AG04450 (cell line): ENCODE measurements at regions of chr4 and their contacts with region 1.

Region 1: DNA sequence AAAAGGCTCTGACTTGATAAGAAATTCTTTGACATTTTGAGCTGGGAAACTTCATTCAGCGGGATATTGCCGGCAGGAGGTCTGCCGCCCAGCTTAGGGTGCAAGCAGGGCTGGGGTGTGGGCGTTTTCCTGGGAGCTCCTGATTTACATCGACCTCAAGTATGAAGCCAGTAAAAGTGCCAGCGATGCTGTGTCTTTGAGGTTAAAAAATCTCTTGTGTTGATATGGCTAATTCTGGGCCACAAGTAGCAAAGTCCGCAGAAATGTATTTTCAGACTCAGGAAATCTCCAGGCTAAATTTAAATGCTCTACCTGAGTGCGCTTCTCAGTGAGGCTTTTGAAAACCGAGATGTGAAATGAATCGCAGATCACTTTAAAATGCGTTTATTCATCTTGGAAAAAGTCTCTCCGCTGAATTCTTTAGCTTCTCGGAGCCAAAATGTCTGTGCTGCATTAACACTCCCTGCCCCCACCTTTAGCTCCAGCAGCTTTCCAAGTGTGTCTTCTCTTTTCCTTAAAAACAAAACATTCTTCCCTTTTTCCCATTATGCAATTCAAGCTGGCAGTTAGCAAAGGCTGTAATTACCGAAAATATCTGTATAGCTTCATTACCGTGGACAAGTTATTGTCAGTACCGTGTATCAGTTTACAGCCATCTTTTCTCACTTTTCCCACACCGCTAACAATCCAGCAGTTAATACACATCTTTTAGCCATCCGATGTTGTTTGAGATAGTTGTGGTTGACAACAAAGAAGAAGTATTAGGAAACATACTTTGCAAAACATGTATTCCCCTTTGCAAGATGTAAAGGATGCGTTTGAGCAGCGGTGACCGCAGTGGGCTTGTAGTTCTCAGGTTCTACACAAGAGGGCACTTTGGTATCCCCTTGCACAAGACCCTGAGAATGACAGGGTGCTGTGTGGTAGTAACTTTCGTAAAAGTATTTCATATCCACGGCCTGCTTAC is 136.0 kb upstream of the STX18 start:
- DNase-seq: no peak
- H3K4me3 ChIP-seq: peak overlapping the region; percentile 35
- H3K27ac ChIP-seq: no peak overlapping the region
- H3K27me3 ChIP-seq: no peaks in the 10 kb centered on the region
- CTCF ChIP-seq: peak; percentile 81

Region 2: DNA sequence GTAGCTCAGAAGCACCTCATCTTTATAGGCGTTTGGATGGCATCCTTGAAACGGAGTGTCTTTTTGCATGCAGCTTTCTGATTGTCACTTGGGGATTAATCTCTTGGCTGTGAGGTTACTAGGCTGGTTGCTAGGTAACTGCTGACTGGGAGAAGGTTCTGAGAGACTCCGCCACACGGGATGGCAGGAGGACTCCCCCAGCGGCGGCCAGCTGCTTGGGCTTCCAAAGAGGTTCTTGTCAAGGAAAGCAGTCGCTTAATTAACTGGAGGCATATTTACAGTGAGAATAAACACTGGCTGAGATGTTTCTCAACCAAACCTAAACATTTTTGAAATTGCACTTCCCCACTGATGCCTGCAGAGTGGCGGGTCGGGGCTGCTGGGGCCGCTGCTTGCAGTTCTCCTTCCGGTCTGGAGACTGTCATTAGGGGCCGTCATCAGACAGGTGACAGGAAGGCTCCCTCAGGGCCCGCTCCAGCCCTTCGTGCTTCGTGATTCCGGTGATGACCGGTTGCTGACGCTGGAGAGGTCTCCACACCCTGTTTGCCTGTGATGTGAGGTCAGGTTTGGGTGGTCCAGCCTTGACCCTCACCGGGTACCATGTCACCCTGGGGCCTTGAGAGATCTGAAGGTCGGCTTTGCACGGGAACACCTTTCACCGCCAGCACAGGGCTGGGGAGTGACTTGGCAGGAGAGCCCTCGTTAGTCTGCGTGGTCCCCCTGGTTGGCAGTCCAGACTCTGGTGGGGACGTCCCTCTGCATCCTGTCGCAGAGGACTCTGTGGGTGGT is 281.8 kb before region 1 on chr4:
- CTCF ChIA-PET with region 1: no interaction called
- POLR2A ChIA-PET with region 1: no interaction called
- DNase-seq: peak; percentile 42
- H3K4me3 ChIP-seq: peak overlapping the region; percentile 2; the same call in 1 of the 2 replicates
- H3K27ac ChIP-seq: peak overlapping the region; percentile 77
- H3K27me3 ChIP-seq: peaks cover 41% of the 10 kb centered on the region
- CTCF ChIP-seq: peak; percentile 0; the same call in 1 of the 2 replicates

Region 3: DNA sequence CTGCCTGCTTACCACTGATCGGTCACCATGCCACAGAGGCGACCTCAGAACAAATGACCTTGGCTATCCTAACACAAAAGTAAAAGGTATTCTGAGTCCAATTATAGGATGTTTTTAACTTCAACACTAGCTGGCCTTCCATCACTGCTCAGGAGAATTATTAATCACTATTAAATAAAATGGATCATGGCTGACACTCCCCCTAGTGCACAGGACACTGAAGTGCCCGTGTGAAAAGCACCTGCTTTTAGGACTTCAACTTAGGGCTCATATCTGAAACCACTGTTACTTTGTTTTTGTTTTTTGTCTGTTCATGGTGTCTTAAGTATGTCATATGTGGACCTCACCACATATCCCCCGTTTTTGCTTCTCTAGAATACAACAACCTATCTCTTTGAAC is 169.9 kb before region 1 on chr4:
- CTCF ChIA-PET with region 1: interaction called, 12 read pairs
- POLR2A ChIA-PET with region 1: no interaction called
- DNase-seq: no peak
- H3K4me3 ChIP-seq: no peak overlapping the region
- H3K27ac ChIP-seq: no peak overlapping the region
- H3K27me3 ChIP-seq: no peaks in the 10 kb centered on the region
- CTCF ChIP-seq: peak; percentile 58

Region 4: GRCh38 chr4:4666693-4667621 is 10.9 kb before region 1 on chr4:
- CTCF ChIA-PET with region 1: interaction called, 10 read pairs
- POLR2A ChIA-PET with region 1: no interaction called
- DNase-seq: no peak
- H3K4me3 ChIP-seq: no peak overlapping the region
- H3K27ac ChIP-seq: peak overlapping the region; percentile 31
- H3K27me3 ChIP-seq: no peaks in the 10 kb centered on the region
- CTCF ChIP-seq: peak; percentile 20; the same call in 1 of the 2 replicates

Region 5: GRCh38 chr4:4689694-4690440 is 12.0 kb after region 1 on chr4:
- CTCF ChIA-PET with region 1: interaction called, 10 read pairs
- POLR2A ChIA-PET with region 1: no interaction called
- DNase-seq: no peak
- H3K4me3 ChIP-seq: no peak overlapping the region
- H3K27ac ChIP-seq: no peak overlapping the region
- H3K27me3 ChIP-seq: peaks cover 2% of the 10 kb centered on the region
- CTCF ChIP-seq: no peak

Region 6: DNA sequence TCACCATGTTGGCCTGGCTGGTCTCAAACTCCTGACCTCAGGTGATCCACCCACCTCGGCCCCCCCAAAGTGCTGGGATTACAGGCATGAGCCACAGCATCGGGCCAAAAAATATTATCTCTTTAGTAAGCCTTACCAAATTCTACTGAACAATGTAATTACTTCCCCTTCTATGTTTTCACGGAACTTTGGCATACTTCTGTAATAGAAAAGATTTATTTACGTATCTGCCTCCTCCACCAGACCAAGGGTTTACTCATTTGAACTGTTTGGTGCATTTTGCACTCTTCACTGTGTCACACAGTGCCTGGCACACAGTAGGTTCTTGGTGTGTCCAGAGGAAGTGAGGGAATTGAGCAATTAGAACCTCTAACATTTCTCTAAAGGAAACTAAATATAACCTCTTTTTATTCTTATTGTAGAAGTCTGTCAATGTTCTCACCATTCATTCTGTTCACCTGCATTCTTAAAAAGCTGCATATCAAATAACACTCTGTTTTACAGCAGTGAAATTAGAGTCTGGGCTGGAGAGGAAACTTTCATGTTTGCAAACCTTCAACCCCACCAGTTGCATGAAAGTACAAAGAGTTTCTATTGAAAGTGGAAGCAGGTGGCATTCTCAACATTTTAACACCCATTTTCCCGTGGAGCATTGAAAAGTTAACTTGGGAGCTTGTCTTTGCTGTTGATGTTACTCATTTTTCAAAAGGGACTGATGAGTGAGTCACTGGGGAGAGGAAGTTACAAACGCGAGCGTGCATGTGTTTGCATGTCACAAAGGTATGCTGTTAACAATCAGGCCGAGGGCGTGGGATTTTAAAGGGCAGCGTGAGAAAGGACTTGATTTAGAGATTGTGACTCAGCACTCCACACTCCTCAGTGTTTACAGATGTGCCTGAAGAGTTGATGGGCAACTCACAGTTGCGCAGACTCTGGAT is 687.5 kb after region 1 on chr4:
- CTCF ChIA-PET with region 1: no interaction called
- POLR2A ChIA-PET with region 1: no interaction called
- DNase-seq: peak; percentile 72
- H3K4me3 ChIP-seq: no peak overlapping the region
- H3K27ac ChIP-seq: no peak overlapping the region
- H3K27me3 ChIP-seq: peaks cover 2% of the 10 kb centered on the region
- CTCF ChIP-seq: no peak

Region 7: GRCh38 chr4:5812506-5813229 is 1134.8 kb after region 1 on chr4:
- CTCF ChIA-PET with region 1: interaction called, 11 read pairs
- POLR2A ChIA-PET with region 1: no interaction called
- DNase-seq: peak; percentile 42
- H3K4me3 ChIP-seq: no peak overlapping the region
- H3K27ac ChIP-seq: no peak overlapping the region
- H3K27me3 ChIP-seq: no peaks in the 10 kb centered on the region
- CTCF ChIP-seq: peak; percentile 85